BJ (cell line): ENCODE measurements at regions of chr1 and their contacts with region 1.

Region 1: GRCh38 chr1:43554444-43554992 is 23.8 kb downstream of the PTPRF start:
- DNase-seq: no peak
- H3K4me3 ChIP-seq: no peak overlapping the region
- H3K27me3 ChIP-seq: no peaks in the 10 kb centered on the region
- CTCF ChIP-seq: peak; percentile 73

Region 2: GRCh38 chr1:43565600-43566360 is 11.3 kb after region 1 on chr1:
- CTCF ChIA-PET with region 1: interaction called, 17 read pairs
- POLR2A ChIA-PET with region 1: interaction called, 3 read pairs
- DNase-seq: no peak
- H3K4me3 ChIP-seq: peak overlapping the region; percentile 49
- H3K27me3 ChIP-seq: no peaks in the 10 kb centered on the region
- CTCF ChIP-seq: no peak